MCF 10A (cell line): ENCODE measurements at regions of chr17 and their contacts with region 1.

Region 1: GRCh38 chr17:40113110-40113906 is 8.5 kb upstream of the MSL1 start:
- DNase-seq: peak; percentile 97
- H3K4me3 Mint-ChIP-seq: peak overlapping the region; percentile 74
- H3K27ac Mint-ChIP-seq: peak overlapping the region; percentile 78
- H3K4me1 Mint-ChIP-seq: peaks cover 39% of the 10 kb centered on the region
- H3K27me3 Mint-ChIP-seq: no peaks in the 10 kb centered on the region
- CTCF ChIP-seq: peak; percentile 55

Region 2: DNA sequence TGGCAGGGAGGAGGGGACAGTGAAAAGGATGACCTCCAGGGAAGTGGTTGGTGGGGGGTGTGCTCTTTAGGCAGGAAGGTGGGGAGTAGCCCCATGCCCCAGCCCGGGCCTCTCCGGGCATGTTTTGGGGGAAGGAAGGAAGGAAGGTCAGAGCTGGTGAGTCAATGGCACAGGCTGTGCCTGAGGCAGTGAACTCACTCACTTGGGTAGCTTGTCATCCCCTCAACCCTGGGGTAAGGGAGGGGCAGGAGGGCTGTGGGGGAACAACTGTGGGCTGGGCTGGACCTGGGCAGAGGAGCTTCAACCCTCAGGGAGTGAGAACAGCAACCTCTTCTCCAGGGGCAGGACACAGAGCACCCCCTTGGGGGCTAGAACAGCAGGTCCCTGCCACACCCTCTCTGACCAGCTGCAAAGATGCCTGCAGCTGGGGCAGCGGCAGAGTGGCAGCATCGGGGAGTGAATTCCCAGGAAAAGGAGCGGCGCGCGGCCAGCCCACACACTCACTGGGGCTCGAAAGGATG is 91.8 kb before region 1 on chr17:
- CTCF ChIA-PET with region 1: interaction called, 61 read pairs
- POLR2A ChIA-PET with region 1: interaction called, 54 read pairs
- intact Hi-C with region 1: loop called (anchors 5 kb)
- DNase-seq: peak; percentile 99
- H3K4me3 Mint-ChIP-seq: peak overlapping the region; percentile 47
- H3K27ac Mint-ChIP-seq: peak overlapping the region; percentile 96
- H3K4me1 Mint-ChIP-seq: peaks cover 74% of the 10 kb centered on the region
- H3K27me3 Mint-ChIP-seq: no peaks in the 10 kb centered on the region
- CTCF ChIP-seq: no peak

Region 3: GRCh38 chr17:40068917-40069750 is 44.2 kb before region 1 on chr17:
- CTCF ChIA-PET with region 1: interaction called, 75 read pairs
- POLR2A ChIA-PET with region 1: interaction called, 10 read pairs
- intact Hi-C with region 1: no loop called
- DNase-seq: peak; percentile 50
- H3K4me3 Mint-ChIP-seq: peak overlapping the region; percentile 62
- H3K27ac Mint-ChIP-seq: peak overlapping the region; percentile 80
- H3K4me1 Mint-ChIP-seq: peaks cover 80% of the 10 kb centered on the region
- H3K27me3 Mint-ChIP-seq: no peaks in the 10 kb centered on the region
- CTCF ChIP-seq: no peak

Region 4: DNA sequence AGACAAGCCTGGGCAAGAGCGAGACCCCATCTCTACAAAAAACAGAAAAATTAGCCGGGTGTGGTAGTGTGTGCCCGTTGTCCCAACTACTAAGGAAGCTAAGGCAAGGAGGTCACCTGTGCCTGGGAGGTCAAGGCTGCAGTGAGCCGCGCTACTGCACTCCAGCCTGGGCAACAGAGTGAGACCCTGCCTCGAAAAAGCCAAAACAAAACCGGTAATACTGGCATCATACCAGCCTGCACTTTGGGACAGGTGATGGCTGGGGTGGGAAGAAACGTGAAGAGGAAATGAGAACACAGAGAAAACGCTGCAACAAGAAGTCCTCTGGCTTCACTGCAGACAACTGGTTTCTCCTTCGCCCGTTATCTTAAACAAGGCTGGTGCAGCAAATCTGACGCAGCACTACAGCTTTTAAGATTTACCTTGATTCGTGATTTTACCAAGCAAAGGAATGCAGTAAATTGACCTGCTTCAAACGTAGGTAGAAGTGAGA is 26.3 kb after region 1 on chr17:
- CTCF ChIA-PET with region 1: interaction called, 23 read pairs
- POLR2A ChIA-PET with region 1: interaction called, 129 read pairs
- intact Hi-C with region 1: no loop called
- DNase-seq: no peak
- H3K4me3 Mint-ChIP-seq: peak overlapping the region; percentile 90
- H3K27ac Mint-ChIP-seq: peak overlapping the region; percentile 81
- H3K4me1 Mint-ChIP-seq: peaks cover 8% of the 10 kb centered on the region
- H3K27me3 Mint-ChIP-seq: no peaks in the 10 kb centered on the region
- CTCF ChIP-seq: no peak

Region 5: GRCh38 chr17:40177275-40177874 is 64.1 kb after region 1 on chr17 and contains the start of gene RAPGEFL1:
- CTCF ChIA-PET with region 1: interaction called, 13 read pairs
- POLR2A ChIA-PET with region 1: interaction called, 29 read pairs
- intact Hi-C with region 1: no loop called
- DNase-seq: peak; percentile 69
- H3K4me3 Mint-ChIP-seq: peak within 1 kb of the TSS; percentile 59
- H3K27ac Mint-ChIP-seq: peak within 1 kb of the TSS; percentile 92
- H3K4me1 Mint-ChIP-seq: peaks cover 29% of the 10 kb centered on the region
- H3K27me3 Mint-ChIP-seq: no peaks in the 10 kb centered on the region
- CTCF ChIP-seq: no peak
- total RNA-seq, gene RAPGEFL1: 4.9 and 5.6 TPM in 2 replicates

Region 6: GRCh38 chr17:40287494-40288369 is 174.4 kb after region 1 on chr17 and contains the start of gene CDC6:
- CTCF ChIA-PET with region 1: interaction called, 49 read pairs
- POLR2A ChIA-PET with region 1: interaction called, 12 read pairs
- intact Hi-C with region 1: loop called (anchors 1 kb)
- DNase-seq: peak; percentile 100
- H3K4me3 Mint-ChIP-seq: peak within 1 kb of the TSS; percentile 99
- H3K27ac Mint-ChIP-seq: peak within 1 kb of the TSS; percentile 69
- H3K4me1 Mint-ChIP-seq: peaks cover 24% of the 10 kb centered on the region
- H3K27me3 Mint-ChIP-seq: no peaks in the 10 kb centered on the region
- CTCF ChIP-seq: no peak
- total RNA-seq, gene CDC6: 70.0 and 96.8 TPM in 2 replicates